ENCODE measurements at regions of chr11 and their contacts with region 1.

Region 1: GRCh38 chr11:63567044-63567840 is 4.1 kb upstream of the PLAAT2 start:
- DNase-seq: peak; percentile 72 to 96
- H3K4me3 ChIP-seq: peak overlapping the region; percentile 35; the same call in 1 of the 2 replicates
- H3K27ac ChIP-seq: peak overlapping the region; percentile 91
- H3K4me1 ChIP-seq: peaks cover 56% of the 10 kb centered on the region
- H3K27me3 ChIP-seq: no peaks in the 10 kb centered on the region
- CTCF ChIP-seq: no peak

Region 2: DNA sequence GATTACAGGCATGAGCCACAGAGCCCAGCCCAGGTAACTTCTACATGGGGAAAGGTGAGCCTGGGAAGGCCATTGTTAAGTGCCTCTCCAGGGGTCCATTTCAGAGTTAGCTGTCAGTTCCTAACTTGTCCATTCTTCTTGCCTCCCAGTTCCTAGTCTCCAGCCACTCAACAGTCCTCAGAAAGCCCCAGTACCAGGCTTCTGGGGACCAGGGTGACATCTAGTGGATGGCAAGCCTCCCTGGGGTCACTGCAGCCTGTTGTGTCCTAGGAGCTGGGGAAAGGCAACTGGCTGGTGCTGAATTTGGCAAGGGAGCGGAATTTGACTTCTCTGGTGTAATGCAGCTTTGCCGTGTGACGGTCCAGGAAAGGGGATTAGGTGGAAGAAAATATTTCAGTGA is 59.2 kb before region 1 on chr11:
- CTCF ChIA-PET with region 1: no interaction called
- POLR2A ChIA-PET with region 1: no interaction called
- intact Hi-C with region 1: loop called (anchors 10 kb)
- DNase-seq: peak; percentile 42 to 44
- H3K4me3 ChIP-seq: no peak overlapping the region
- H3K27ac ChIP-seq: no peak overlapping the region
- H3K4me1 ChIP-seq: no peaks in the 10 kb centered on the region
- H3K27me3 ChIP-seq: no peaks in the 10 kb centered on the region
- CTCF ChIP-seq: peak; percentile 52; the same call in 1 of the 2 replicates

Region 3: GRCh38 chr11:63536669-63537292 is 30.5 kb before region 1 on chr11 and contains the start of gene PLAAT4:
- CTCF ChIA-PET with region 1: interaction called, 4 read pairs
- POLR2A ChIA-PET with region 1: interaction called, 6 read pairs
- intact Hi-C with region 1: loop called (anchors 1 kb)
- DNase-seq: peak in 1 of 2 experiments; percentile 37
- H3K4me3 ChIP-seq: peak within 1 kb of the TSS; percentile 17; the same call in 1 of the 2 replicates
- H3K27ac ChIP-seq: no peak within 1 kb of the TSS
- H3K4me1 ChIP-seq: peaks cover 32% of the 10 kb centered on the region
- H3K27me3 ChIP-seq: no peaks in the 10 kb centered on the region
- CTCF ChIP-seq: no peak
- total RNA-seq, gene PLAAT4: 64.6 and 99.9 TPM in 2 replicates

Region 4: DNA sequence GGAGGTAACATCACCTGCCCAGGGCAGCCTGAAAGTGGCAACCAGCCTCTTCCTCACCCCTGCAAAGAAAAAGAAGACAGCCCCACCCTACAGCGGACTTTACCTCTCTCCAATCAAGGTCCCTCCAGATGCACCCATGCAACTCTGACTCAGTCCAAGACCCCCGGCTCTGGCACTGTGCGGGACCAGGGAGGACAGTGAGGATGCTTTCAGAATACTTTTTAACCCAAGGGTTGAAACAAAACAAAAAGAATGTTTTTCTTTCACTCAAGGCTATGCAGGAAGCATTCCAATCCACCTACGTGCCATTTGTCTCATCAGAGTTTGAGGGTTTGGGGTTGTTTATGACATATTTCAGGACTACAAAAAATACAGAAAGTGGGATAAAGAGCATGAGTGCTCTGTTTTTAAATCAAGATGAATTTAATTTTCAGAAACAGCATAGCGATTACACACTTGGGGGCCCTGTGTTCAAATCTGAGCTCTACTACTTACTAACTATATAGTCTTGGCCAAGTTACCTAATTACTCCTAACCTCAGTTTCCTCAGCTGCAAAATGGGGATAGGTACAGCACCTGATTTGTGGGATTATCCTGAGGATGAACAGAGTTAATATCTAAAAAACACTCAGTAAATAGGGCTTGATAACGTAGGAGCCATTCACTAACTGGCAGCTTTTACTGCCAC is 41.3 kb after region 1 on chr11:
- CTCF ChIA-PET with region 1: interaction called, 9 read pairs
- POLR2A ChIA-PET with region 1: interaction called, 3 read pairs
- intact Hi-C with region 1: loop called (anchors 1 kb)
- DNase-seq: peak; percentile 70 to 92
- H3K4me3 ChIP-seq: peak overlapping the region; percentile 33; the same call in 1 of the 2 replicates
- H3K27ac ChIP-seq: peak overlapping the region; percentile 89
- H3K4me1 ChIP-seq: peaks cover 64% of the 10 kb centered on the region
- H3K27me3 ChIP-seq: no peaks in the 10 kb centered on the region
- CTCF ChIP-seq: no peak

Measured in PC-9 (cell line).